Activated T-helper 2 cell treated with anti-CD3 and anti-CD28 coated beads, Interferon-gamma antibody, Interleukin-2, Interleukin-4, amounts not matched to agents 10 μg/mL and 5 μg/mL and 100 μg/mL, durations not matched to agents 14 hours and 24 hours and 36 hours (primary cell): ENCODE measurements at regions of chr4 and their contacts with region 1.

Region 1: GRCh38 chr4:185020293-185020808 is 2.1 kb downstream of the HELT start:
- DNase-seq: no peak
- H3K4me3 Mint-ChIP-seq: no peak overlapping the region
- H3K27ac Mint-ChIP-seq: no peak overlapping the region
- H3K4me1 Mint-ChIP-seq: peaks cover 2% of the 10 kb centered on the region
- H3K27me3 Mint-ChIP-seq: peaks cover 82% of the 10 kb centered on the region

Region 2: GRCh38 chr4:183905081-183905592 is 1115.2 kb before region 1 on chr4 and contains the start of gene STOX2:
- intact Hi-C with region 1: loop called (anchors 2 kb)
- DNase-seq: no peak
- H3K4me3 Mint-ChIP-seq: peak within 1 kb of the TSS; percentile 30
- H3K27ac Mint-ChIP-seq: no peak within 1 kb of the TSS
- H3K4me1 Mint-ChIP-seq: peaks cover 1% of the 10 kb centered on the region
- H3K27me3 Mint-ChIP-seq: peaks cover 66% of the 10 kb centered on the region
- total RNA-seq, gene STOX2: not detected in 2 replicates

Region 3: GRCh38 chr4:184474263-184475095 is 545.9 kb before region 1 on chr4 and contains the start of gene IRF2:
- intact Hi-C with region 1: no loop called
- DNase-seq: peak; percentile 96
- H3K4me3 Mint-ChIP-seq: peak within 1 kb of the TSS; percentile 95
- H3K27ac Mint-ChIP-seq: peak within 1 kb of the TSS; percentile 96
- H3K4me1 Mint-ChIP-seq: peaks cover 46% of the 10 kb centered on the region
- H3K27me3 Mint-ChIP-seq: no peaks in the 10 kb centered on the region
- total RNA-seq, gene IRF2: 47.6 and 53.2 TPM in 2 replicates

Region 4: DNA sequence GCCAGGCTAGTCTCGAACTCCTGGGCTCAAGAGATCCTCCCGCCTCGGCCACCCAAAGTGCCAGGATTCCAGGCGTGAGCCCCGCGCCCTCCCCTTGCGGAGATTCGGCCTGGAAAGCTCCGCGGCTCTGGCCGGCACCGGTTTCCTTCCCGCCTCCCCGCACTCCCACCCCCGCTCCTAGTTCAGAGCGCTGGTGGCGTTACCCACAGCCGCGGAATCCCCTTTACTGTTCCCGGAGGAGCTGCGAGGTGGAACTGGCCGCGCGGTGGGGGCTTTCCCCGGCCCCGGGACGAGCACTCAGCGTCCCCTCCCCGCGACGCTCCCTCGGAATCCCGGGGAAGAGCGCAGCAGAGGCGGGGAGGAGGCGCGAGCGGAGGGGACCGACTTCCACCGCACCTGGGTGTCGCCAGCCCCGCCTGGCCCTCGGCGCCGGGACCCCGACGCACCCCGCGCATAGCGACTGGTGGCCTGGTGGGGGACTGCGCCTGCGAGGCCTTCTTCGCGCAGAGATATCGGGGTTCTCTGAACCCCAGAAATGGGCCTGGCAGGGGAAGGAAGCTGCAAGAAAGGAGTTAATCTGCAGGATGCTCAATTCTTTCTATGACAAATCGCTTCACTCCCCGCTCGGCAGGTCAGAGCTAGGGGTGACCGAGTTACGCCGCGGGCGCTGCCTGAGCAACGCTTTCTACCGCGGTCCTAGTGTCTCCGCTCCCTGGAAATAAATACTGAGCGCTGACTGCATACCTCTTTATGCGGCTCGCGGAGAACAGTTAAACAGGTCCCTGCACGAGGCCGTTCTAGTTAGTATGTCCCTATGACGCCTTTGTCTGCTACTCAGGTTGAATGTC is 108.1 kb after region 1 on chr4:
- intact Hi-C with region 1: loop called (anchors 2 kb)
- DNase-seq: no peak
- H3K4me3 Mint-ChIP-seq: peak overlapping the region; percentile 39
- H3K27ac Mint-ChIP-seq: no peak overlapping the region
- H3K4me1 Mint-ChIP-seq: peaks cover 4% of the 10 kb centered on the region
- H3K27me3 Mint-ChIP-seq: peaks cover 59% of the 10 kb centered on the region

Region 5: DNA sequence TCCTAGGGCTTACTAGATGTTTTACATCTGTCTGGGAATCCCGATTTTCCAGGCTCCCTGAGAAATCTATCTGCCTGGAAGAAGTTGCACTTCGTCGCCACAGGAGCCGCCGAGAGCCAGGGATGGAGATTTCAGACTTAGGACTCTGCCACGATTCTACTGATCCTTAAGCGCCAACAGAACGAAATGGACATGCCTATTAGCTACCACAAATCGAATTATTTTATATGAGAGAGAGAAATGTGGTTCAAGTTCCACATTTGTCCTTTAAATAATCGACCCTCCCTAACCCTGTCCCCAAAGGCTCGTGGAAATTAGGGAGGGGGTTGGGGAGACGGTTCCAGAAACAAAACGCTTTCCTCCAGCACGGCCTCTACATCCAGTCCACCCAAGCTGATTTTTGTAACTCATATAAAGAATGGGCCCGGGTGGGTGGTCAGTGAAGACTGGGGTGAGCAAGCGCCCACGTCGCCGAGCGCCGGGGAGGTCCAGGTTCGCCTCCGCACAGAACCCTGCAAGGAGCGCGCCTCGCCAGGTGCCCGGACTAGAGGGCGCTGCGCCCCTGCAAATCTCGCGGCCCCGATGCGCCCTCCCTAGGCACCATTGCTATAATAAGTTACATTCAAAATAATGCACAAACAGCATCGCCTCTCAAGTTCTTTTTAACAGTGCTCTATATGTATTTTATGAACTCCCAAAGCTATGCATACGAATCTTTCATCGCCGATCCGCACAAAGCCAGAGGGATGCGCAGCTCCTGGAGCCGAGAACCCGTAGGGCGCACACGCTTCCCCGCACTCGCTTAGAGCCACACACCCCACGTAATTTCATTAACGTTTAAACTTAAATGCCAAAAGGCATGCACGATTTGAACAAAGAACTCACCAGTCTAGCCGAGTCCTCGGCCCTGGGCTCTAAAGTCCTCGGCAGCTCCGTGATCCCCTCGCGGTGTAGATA is 1705.4 kb after region 1 on chr4:
- intact Hi-C with region 1: loop called (anchors 5 kb)
- DNase-seq: no peak
- H3K4me3 Mint-ChIP-seq: peak overlapping the region; percentile 33
- H3K27ac Mint-ChIP-seq: no peak overlapping the region
- H3K4me1 Mint-ChIP-seq: no peaks in the 10 kb centered on the region
- H3K27me3 Mint-ChIP-seq: peaks cover 52% of the 10 kb centered on the region